BJ (cell line): ENCODE measurements at regions of chr5 and their contacts with region 1.

Region 1: GRCh38 chr5:140113699-140114263 is at the start of gene PURA:
- DNase-seq: peak; percentile 48
- H3K4me3 ChIP-seq: peak within 1 kb of the TSS; percentile 88
- H3K27me3 ChIP-seq: no peaks in the 10 kb centered on the region
- CTCF ChIP-seq: no peak
- polyA plus RNA-seq, gene PURA: 5.2 and 6.7 TPM in 2 replicates

Region 2: DNA sequence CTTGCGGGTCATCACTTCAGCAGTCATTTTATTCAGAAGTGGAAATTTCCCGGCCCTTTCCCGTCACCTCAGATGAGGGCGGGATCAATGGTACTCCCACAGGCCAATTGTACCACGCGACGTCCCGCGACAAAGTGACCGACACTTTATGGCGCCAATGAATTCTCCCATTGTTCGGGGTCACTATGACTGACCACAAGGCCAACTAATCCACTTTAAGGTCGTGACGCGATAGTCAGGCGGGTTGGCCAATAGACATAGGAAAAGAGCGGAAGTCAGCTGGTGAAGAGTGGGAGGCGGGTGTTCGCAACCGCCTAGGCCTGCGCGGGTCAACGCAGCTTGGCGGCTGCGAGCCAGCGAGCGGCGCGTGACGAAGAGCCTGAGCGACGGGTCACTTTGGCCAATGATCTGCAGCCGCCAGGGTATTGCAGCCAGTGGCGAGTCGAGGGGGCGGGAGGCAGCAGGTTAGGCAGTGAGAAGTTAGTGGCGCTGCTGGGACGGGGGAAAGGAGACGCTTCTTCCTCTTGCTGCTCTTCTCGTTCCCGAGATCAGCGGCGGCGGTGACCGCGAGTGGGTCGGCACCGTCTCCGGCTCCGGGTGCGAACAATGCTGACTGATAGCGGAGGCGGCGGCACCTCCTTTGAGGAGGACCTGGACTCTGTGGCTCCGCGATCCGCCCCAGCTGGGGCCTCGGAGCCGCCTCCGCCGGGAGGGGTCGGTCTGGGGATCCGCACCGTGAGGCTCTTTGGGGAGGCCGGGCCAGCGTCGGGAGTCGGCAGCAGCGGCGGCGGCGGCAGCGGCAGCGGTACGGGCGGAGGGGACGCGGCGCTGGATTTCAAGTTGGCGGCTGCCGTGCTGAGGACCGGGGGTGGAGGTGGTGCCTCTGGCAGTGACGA is 287.8 kb after region 1 on chr5 and contains the start of gene ANKHD1:
- CTCF ChIA-PET with region 1: no interaction called
- POLR2A ChIA-PET with region 1: interaction called, 11 read pairs
- DNase-seq: peak; percentile 100
- H3K4me3 ChIP-seq: peak within 1 kb of the TSS; percentile 86
- H3K27me3 ChIP-seq: no peaks in the 10 kb centered on the region
- CTCF ChIP-seq: no peak
- polyA plus RNA-seq, gene ANKHD1: 28.0 and 37.4 TPM in 2 replicates